ENCODE measurements at regions of chr6 and their contacts with region 1.

Region 1: DNA sequence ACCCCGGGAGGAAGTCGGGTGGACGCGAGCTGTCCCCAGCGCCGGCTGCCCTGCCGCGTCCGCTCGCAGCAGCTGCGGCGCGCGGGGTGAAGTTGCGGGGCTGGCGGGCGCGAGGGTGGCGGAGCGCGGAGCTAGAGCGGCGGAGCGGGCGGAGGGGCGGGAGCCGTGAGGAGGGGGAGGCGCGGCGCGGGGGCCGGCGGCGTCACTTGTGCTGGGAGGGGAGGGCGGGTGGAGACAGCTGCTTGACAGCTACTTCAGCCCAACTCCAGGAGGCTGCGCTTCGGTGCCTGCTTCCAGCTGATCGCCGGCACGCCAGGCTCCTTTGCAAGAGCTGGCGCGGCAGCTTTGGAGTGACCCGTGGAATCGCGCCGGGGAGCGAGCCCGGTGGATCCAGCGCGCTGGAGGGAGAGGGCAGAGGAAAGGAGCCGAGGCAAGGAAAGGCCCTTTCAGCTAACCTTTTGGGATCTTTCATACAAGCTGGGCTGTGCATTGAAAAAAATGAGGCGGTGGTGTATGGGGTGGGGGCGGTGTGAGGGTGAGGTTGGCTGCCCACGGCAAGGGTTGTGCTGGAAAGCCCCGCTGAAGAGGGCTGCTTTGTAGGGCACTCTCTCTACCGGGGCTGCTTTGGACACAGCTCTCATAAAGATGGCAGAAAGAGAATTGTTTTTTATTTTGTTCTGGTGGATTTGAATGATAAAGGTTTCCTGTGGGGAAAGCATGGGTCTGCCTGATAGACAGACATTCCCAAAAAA is 24.6 kb downstream of the RIPOR2 start:
- DNase-seq: peak; percentile 37
- H3K4me3 ChIP-seq: peak overlapping the region; percentile 77
- H3K27me3 ChIP-seq: peaks cover 3% of the 10 kb centered on the region
- CTCF ChIP-seq: no peak

Region 2: DNA sequence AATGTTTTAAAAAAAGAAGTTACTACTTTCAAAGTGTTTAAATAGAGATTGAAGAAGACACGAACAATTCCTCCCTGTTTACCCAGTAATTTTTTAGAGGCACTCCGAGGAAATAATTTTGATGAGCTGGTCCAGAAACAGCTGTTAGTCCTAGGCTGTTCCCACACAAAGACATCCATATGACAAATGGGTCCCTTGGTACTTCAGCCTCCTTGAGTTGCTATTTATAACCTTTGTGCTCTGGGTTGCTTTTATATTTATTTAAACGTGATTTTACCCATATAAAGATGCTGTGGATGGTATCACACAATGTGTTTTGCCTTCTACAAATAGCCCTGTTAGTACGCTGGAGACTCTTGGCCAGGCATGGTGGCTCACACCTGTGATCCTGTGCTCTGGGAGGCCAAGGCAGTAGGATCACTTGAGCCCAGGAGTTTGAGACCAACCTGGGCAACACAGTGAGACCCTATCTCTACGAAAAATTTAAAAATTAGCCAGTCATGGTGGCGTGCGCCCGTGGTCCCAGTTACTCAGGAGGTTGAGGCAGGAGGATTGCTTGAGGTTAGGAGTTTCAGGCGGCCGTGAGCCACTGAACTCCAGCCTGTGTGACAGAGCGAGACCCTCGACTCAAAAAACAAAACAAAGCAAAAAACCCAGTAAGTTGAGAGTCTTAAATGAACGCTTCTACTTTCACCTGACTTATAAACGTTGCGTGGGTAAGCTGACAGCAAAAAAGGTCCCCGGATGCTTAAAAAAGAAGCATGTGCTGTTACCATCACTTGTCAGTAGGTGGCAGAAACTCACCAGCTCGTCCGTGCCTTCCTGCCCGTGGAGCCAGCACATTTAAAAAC is 55.5 kb before region 1 on chr6:
- CTCF ChIA-PET with region 1: interaction called, 18 read pairs
- POLR2A ChIA-PET with region 1: no interaction called
- DNase-seq: no peak
- H3K4me3 ChIP-seq: no peak overlapping the region
- H3K27me3 ChIP-seq: no peaks in the 10 kb centered on the region
- CTCF ChIP-seq: peak; percentile 77

Region 3: GRCh38 chr6:24883618-24884017 is 27.5 kb before region 1 on chr6:
- CTCF ChIA-PET with region 1: interaction called, 12 read pairs
- POLR2A ChIA-PET with region 1: interaction called, 3 read pairs
- DNase-seq: peak; percentile 55
- H3K4me3 ChIP-seq: no peak overlapping the region
- H3K27me3 ChIP-seq: no peaks in the 10 kb centered on the region
- CTCF ChIP-seq: no peak

Region 4: GRCh38 chr6:24899997-24900325 is 11.2 kb before region 1 on chr6:
- CTCF ChIA-PET with region 1: interaction called, 19 read pairs
- POLR2A ChIA-PET with region 1: no interaction called
- DNase-seq: no peak
- H3K4me3 ChIP-seq: no peak overlapping the region
- H3K27me3 ChIP-seq: no peaks in the 10 kb centered on the region
- CTCF ChIP-seq: no peak

Region 5: DNA sequence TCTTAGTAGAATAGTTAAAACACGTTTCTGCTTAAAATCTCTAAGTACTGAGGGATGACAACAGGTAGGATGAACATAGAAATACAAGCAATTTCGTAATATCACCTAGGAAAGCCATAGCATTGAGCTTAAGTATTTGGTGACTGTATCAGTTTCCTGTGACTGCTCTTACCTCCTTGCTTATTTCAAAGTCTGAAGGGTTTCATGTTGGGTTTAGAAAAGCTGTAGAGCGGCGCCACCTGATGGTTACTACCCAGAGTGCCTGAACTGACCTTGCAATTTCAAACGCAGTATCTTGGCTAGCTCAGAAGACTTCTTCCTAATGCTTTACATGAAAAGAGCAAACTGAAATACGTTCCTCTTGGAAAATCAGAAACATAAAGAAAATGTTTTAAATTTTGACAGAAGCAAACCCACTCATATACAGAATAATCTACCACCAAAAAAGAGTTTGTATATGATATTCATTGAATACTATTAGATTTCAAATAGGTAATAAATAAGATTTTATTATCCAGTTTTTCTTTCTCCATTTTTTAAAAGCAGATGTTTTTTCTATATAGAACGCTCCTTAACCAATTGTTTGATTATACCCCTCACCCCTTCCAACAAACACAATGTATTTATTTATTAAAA is 106.9 kb after region 1 on chr6:
- CTCF ChIA-PET with region 1: interaction called, 16 read pairs
- POLR2A ChIA-PET with region 1: no interaction called
- DNase-seq: no peak
- H3K4me3 ChIP-seq: no peak overlapping the region
- H3K27me3 ChIP-seq: no peaks in the 10 kb centered on the region
- CTCF ChIP-seq: peak; percentile 67